ENCODE measurements at regions of chr6 and their contacts with region 1.

Region 1: DNA sequence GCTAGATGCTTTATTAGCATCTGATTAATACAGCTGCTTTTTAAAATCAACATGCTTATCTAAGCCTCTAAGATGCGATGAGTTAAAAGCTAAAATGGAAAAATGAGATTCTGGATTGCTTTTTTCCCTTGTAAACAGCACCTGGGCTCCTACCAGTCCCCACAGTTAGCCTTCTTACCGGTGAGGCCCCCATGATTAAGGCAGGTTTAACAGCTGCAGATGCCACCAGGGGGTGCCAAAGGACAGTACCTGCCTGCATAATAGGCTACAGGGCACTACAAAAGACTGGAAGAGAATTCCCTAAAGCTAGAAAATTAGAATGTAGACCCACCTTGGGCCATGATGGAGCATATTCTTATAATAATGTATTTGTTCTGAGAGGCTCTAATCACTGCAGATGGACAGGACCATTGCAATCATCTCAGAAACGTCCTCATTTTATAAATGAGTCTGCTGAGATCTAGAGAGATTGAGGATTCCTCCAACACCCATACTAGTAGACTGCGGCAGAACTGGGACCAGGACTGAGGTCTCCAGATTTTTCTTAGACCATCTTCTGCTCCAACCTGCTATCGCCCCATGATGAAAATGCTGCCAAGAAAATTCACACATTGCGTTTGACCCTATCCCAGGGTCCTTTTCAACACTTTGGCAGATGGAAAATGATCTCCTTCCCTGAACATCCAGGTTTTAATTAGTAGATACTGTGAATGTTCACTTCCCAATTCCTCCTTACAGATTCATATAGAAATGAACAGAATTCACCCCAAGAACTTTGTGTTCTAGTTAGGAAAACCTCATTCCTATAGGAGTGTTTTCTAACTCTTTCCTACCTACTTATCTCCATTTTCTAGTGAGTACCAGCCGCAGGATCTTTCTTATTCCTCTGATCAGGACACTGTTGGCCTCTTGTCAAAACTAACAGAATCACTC is 148.8 kb downstream of the RPS12 start:
- DNase-seq: peak; percentile 61 to 65
- H3K4me3 ChIP-seq: no peak overlapping the region
- H3K27ac ChIP-seq: no peak overlapping the region
- H3K4me1 ChIP-seq: peaks cover 29% of the 10 kb centered on the region
- H3K27me3 ChIP-seq: no peaks in the 10 kb centered on the region
- CTCF ChIP-seq: peak; percentile 92

Region 2: DNA sequence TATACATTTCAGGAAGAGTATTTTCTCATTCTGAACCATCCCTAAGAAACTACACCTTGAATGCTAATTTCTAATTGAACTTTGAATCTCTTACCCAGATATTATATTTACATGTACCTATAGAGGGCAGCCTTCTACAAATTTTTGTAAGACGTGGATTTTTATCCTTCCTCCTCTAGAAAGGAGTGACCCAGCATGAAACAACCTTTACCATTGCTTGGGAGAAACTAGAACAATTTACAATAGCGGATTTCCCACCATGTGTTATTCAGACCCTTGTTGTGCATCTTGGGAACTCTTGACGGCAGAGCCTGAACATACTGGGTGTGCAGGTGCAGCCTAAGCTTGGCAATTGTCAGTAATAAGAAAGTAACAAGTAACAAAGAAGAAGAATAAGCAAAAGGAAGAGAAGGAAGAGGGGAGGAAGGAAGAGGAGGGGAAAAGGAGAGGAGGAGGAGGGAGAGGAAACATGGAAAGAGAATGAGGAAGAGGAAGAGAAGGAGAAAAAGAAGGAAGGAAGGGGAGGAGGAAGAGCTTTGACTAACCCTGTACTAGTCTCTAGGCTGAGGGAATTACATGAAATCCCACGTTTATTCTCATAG is 293.4 kb before region 1 on chr6:
- CTCF ChIA-PET with region 1: no interaction called
- POLR2A ChIA-PET with region 1: no interaction called
- intact Hi-C with region 1: loop called (anchors 5 kb)
- DNase-seq: peak; percentile 19 to 63
- H3K4me3 ChIP-seq: no peak overlapping the region
- H3K27ac ChIP-seq: no peak overlapping the region
- H3K4me1 ChIP-seq: peaks cover 28% of the 10 kb centered on the region
- H3K27me3 ChIP-seq: no peaks in the 10 kb centered on the region
- CTCF ChIP-seq: peak; percentile 84

Region 3: GRCh38 chr6:133001040-133001570 is 37.9 kb after region 1 on chr6:
- CTCF ChIA-PET with region 1: no interaction called
- POLR2A ChIA-PET with region 1: no interaction called
- intact Hi-C with region 1: no loop called
- DNase-seq: no peak
- H3K4me3 ChIP-seq: no peak overlapping the region
- H3K27ac ChIP-seq: no peak overlapping the region
- H3K4me1 ChIP-seq: peaks cover 8% of the 10 kb centered on the region
- H3K27me3 ChIP-seq: no peaks in the 10 kb centered on the region
- CTCF ChIP-seq: no peak

Region 4: GRCh38 chr6:133184798-133185372 is 221.7 kb after region 1 on chr6:
- CTCF ChIA-PET with region 1: no interaction called
- POLR2A ChIA-PET with region 1: no interaction called
- intact Hi-C with region 1: loop called (anchors 5 kb)
- DNase-seq: no peak
- H3K4me3 ChIP-seq: no peak overlapping the region
- H3K27ac ChIP-seq: no peak overlapping the region
- H3K4me1 ChIP-seq: no peaks in the 10 kb centered on the region
- H3K27me3 ChIP-seq: no peaks in the 10 kb centered on the region
- CTCF ChIP-seq: peak; percentile 92

Region 5: GRCh38 chr6:133393891-133394290 is 430.7 kb after region 1 on chr6:
- CTCF ChIA-PET with region 1: interaction called, 14 read pairs
- POLR2A ChIA-PET with region 1: no interaction called
- intact Hi-C with region 1: no loop called
- DNase-seq: no peak
- H3K4me3 ChIP-seq: no peak overlapping the region
- H3K27ac ChIP-seq: no peak overlapping the region
- H3K4me1 ChIP-seq: no peaks in the 10 kb centered on the region
- H3K27me3 ChIP-seq: no peaks in the 10 kb centered on the region
- CTCF ChIP-seq: no peak

Region 6: GRCh38 chr6:133553652-133554051 is 590.5 kb after region 1 on chr6:
- CTCF ChIA-PET with region 1: no interaction called
- POLR2A ChIA-PET with region 1: no interaction called
- intact Hi-C with region 1: loop called (anchors 1 kb)
- DNase-seq: peak in 1 of 2 experiments; percentile 38
- H3K4me3 ChIP-seq: no peak overlapping the region
- H3K27ac ChIP-seq: no peak overlapping the region
- H3K4me1 ChIP-seq: no peaks in the 10 kb centered on the region
- H3K27me3 ChIP-seq: no peaks in the 10 kb centered on the region
- CTCF ChIP-seq: peak; percentile 89

Region 7: GRCh38 chr6:133923938-133924593 is 960.9 kb after region 1 on chr6:
- CTCF ChIA-PET with region 1: no interaction called
- POLR2A ChIA-PET with region 1: no interaction called
- intact Hi-C with region 1: loop called (anchors 1 kb)
- DNase-seq: peak; percentile 58 to 66
- H3K4me3 ChIP-seq: no peak overlapping the region
- H3K27ac ChIP-seq: no peak overlapping the region
- H3K4me1 ChIP-seq: no peaks in the 10 kb centered on the region
- H3K27me3 ChIP-seq: no peaks in the 10 kb centered on the region
- CTCF ChIP-seq: peak; percentile 98

Measured in PC-9 (cell line).